Activated CD4-positive, alpha-beta memory T cell treated with anti-CD3 and anti-CD28 coated beads, Interleukin-2, amount 10 ng/mL, durations not matched to agents 7 days and 5 days (primary cell): ENCODE measurements at regions of chrX and their contacts with region 1.

Region 1: GRCh38 chrX:65985922-65986588 is 53.8 kb downstream of the VSIG4 start:
- DNase-seq: peak; percentile 37
- H3K4me3 Mint-ChIP-seq: no peak overlapping the region
- H3K27ac Mint-ChIP-seq: peak overlapping the region; percentile 58
- H3K4me1 Mint-ChIP-seq: peaks cover 22% of the 10 kb centered on the region
- H3K27me3 Mint-ChIP-seq: no peaks in the 10 kb centered on the region

Region 2: GRCh38 chrX:65581661-65582339 is 404.3 kb before region 1 on chrX:
- CTCF ChIA-PET with region 1: interaction called, 19 read pairs
- POLR2A ChIA-PET with region 1: no interaction called
- DNase-seq: peak; percentile 56
- H3K4me3 Mint-ChIP-seq: no peak overlapping the region
- H3K27ac Mint-ChIP-seq: no peak overlapping the region
- H3K4me1 Mint-ChIP-seq: peaks cover 13% of the 10 kb centered on the region
- H3K27me3 Mint-ChIP-seq: no peaks in the 10 kb centered on the region